Astrocyte of the cerebellum (primary cell): ENCODE measurements at regions of chr15 and their contacts with region 1.

Region 1: GRCh38 chr15:77419836-77420609 is at the start of gene PEAK1:
- DNase-seq: peak; percentile 98
- H3K4me3 ChIP-seq: peak within 1 kb of the TSS; percentile 88
- CTCF ChIP-seq: no peak

Region 2: GRCh38 chr15:76565366-76565765 is 854.7 kb before region 1 on chr15:
- in situ Hi-C with region 1: no loop called
- DNase-seq: peak; percentile 26
- H3K4me3 ChIP-seq: no peak overlapping the region
- CTCF ChIP-seq: no peak

Region 3: GRCh38 chr15:77475898-77476297 is 55.9 kb after region 1 on chr15:
- in situ Hi-C with region 1: loop called (anchors 5 kb)
- DNase-seq: no peak
- H3K4me3 ChIP-seq: no peak overlapping the region
- CTCF ChIP-seq: no peak

Region 4: GRCh38 chr15:77526791-77527778 is 107.1 kb after region 1 on chr15:
- in situ Hi-C with region 1: loop called (anchors 10 kb)
- DNase-seq: peak; percentile 60
- H3K4me3 ChIP-seq: no peak overlapping the region
- CTCF ChIP-seq: no peak